Activated T-helper 2 cell treated with anti-CD3 and anti-CD28 coated beads, Interferon-gamma antibody, Interleukin-2, Interleukin-4, amounts not matched to agents 10 μg/mL and 5 μg/mL and 100 μg/mL, durations not matched to agents 14 hours and 24 hours and 36 hours (primary cell): ENCODE measurements at regions of chr13 and their contacts with region 1.

Region 1: DNA sequence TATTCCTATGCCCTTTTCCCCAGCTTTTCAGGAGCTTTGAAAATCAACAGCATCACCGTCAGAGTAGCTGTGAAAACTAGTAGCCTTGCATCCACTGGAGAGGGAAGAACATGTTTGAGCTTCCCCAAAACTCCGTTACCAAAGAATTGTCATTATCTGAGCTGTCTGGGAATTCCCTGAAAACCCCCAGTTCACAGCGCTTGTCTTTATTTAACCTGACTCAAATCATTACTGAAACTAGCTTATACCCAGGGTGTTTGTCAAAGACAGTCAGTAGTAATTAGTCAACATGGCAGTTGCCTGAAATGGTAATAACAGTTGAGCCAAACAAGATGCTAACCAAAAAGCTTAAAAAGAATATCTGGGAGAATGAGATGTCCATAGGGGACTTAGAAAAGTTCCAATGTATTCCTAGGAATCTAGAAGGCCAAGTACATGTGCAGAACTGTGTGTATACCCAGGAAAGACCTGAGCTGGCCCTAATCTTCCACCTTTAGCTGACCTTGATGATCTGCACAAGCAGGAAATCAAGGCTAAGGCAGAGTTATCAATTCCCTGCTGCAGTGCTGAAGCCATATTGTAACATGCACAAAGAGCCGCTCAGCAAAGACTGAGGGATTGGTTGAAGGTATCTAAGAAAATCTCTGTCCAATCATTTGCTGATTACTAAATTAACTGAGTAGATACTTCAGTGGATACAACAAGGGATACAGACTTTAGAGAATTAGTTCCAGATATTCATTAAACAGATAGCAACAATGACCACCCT is 130.8 kb downstream of the KL start:
- DNase-seq: no peak
- H3K4me3 Mint-ChIP-seq: no peak overlapping the region
- H3K27ac Mint-ChIP-seq: peak overlapping the region; percentile 74
- H3K4me1 Mint-ChIP-seq: peaks cover 15% of the 10 kb centered on the region
- H3K27me3 Mint-ChIP-seq: no peaks in the 10 kb centered on the region

Region 2: GRCh38 chr13:33204130-33204927 is 57.3 kb after region 1 on chr13:
- intact Hi-C with region 1: loop called (anchors 5 kb)
- DNase-seq: no peak
- H3K4me3 Mint-ChIP-seq: peak overlapping the region; percentile 66
- H3K27ac Mint-ChIP-seq: peak overlapping the region; percentile 76
- H3K4me1 Mint-ChIP-seq: peaks cover 45% of the 10 kb centered on the region
- H3K27me3 Mint-ChIP-seq: no peaks in the 10 kb centered on the region